GM10248 (cell line): ENCODE measurements at regions of chr4 and their contacts with region 1.

Region 1: DNA sequence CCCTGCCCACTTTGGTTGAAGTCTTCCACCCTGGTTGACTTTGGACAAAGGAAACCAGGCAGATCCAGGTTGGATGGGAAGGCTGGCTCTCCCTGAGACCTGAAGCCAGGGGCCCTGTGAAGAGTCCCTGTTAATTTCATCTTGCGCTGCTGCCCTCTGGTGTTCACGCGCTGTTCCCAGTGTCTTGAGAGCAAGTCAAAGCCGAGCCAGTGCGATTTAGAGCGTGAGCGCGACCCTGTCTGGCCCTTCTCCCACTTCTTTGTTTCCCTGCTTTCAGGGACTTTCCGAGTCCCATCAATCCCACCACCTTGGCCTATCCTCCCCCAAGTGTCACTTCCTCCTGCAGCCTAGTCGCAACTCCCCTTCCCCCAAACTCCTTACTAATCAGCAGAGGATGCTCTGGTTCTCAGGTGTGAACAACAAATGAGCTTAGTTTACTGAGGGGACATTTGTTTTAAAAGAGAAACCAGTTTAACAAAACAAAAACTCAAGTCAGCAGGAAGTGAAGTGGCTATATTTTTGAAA is 25.8 kb upstream of the CHRNA9 start:
- DNase-seq: peak; percentile 57
- CTCF ChIP-seq: peak; percentile 91

Region 2: GRCh38 chr4:40149960-40150385 is 159.3 kb before region 1 on chr4:
- CTCF ChIA-PET with region 1: interaction called, 17 read pairs
- POLR2A ChIA-PET with region 1: no interaction called
- DNase-seq: peak; percentile 66
- CTCF ChIP-seq: peak; percentile 82

Region 3: GRCh38 chr4:40199999-40200874 is 109.1 kb before region 1 on chr4:
- CTCF ChIA-PET with region 1: interaction called, 18 read pairs
- POLR2A ChIA-PET with region 1: no interaction called
- DNase-seq: peak; percentile 43
- CTCF ChIP-seq: no peak

Region 4: DNA sequence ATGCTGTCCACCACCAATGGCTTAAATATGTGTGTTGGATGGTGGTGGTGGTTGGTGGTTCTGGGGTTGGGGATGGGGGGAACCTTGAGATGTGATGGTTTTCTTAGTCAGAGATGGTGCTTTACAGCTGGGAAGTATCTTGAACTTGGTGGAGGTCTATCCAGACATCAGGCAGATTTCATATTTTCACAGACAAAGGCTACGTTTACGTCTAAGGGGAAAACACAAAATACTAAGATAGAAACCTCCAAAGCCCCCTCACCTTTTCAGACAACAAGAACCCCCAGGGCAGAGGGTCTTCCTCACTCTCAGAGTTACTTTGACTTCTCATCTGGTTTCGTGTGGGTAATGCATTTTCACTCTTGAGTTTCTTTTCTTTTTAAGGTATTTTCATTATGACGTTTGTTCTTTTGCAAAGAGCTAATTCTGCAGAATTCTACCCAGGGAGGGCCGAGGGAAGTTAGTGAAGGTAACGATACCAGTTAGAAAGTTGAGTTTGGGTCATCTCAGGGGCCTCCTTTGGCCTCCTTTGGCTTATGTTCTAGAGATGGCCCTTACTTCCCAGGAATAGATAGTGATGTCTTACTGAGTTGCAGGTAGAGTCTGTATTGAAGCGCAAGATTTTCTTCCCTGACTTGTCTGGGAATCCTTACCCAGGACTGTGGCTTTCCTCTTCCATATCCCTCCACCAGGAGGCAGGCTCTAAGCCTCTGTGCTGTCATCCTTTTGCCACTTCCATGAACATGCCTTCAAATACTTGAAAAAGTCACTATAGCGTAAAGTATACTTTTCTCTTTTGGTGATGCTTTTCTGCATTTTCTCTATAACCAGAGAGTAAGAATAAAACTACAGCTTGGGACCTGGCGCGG is 80.6 kb before region 1 on chr4:
- CTCF ChIA-PET with region 1: interaction called, 31 read pairs
- POLR2A ChIA-PET with region 1: interaction called, 3 read pairs
- DNase-seq: peak; percentile 56
- CTCF ChIP-seq: peak; percentile 21

Region 5: GRCh38 chr4:40502934-40503333 is 193.6 kb after region 1 on chr4:
- CTCF ChIA-PET with region 1: no interaction called
- POLR2A ChIA-PET with region 1: no interaction called
- DNase-seq: peak; percentile 44
- CTCF ChIP-seq: no peak